ENCODE measurements at regions of chr4 and their contacts with region 1.

Region 1: GRCh38 chr4:77095101-77095821 is 19.5 kb upstream of the CCNI start:
- DNase-seq: no peak
- H3K4me3 ChIP-seq: no peak overlapping the region
- H3K27ac ChIP-seq: no peak overlapping the region
- H3K4me1 ChIP-seq: peaks cover 0 to 16% (median 0%) of the 10 kb centered on the region in 3 donors
- H3K27me3 ChIP-seq: no peaks in the 10 kb centered on the region
- CTCF ChIP-seq: peak; percentile 76 to 85 (median 82)
- POLR2A ChIP-seq: no peak

Region 2: DNA sequence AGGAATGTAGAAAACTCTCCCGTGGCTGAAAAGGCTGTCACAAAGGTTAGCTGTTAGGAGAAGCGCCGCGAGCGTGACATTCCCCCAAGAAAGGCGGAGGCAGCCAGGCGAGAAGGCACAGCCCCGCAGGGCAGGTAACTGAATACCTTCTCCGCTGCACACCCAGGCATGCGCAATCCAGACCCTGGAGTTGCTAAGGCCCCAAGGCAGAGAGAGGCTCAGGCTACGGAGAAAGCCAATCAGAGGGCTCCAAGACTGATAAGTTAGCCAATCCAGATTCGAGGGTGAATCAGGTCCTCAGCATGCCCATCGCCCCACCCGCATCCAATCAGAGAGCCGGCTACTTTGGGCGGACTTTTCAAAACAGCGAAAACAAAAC is 61.3 kb after region 1 on chr4:
- intact Hi-C with region 1: loop called (anchors 10 kb)
- DNase-seq: peak; percentile 89
- H3K4me3 ChIP-seq: peak overlapping the region; percentile 72 to 98 (median 88)
- H3K27ac ChIP-seq: peak overlapping the region; percentile 93 to 98 (median 95)
- H3K4me1 ChIP-seq: peaks cover 3 to 71% (median 11%) of the 10 kb centered on the region in 3 donors
- H3K27me3 ChIP-seq: no peaks in the 10 kb centered on the region
- CTCF ChIP-seq: no peak
- POLR2A ChIP-seq: peak in 1 of 4 donors; percentile 71

Region 3: GRCh38 chr4:77203380-77204197 is 108.3 kb after region 1 on chr4:
- intact Hi-C with region 1: loop called (anchors 10 kb)
- DNase-seq: no peak
- H3K4me3 ChIP-seq: no peak overlapping the region
- H3K27ac ChIP-seq: peak overlapping the region in 3 of 4 donors; percentile 74 to 77 (median 74)
- H3K4me1 ChIP-seq: peaks cover 0 to 40% (median 4%) of the 10 kb centered on the region in 3 donors
- H3K27me3 ChIP-seq: no peaks in the 10 kb centered on the region
- CTCF ChIP-seq: peak; percentile 37 to 89 (median 78)
- POLR2A ChIP-seq: no peak